ENCODE measurements at regions of chr10 and their contacts with region 1.

Region 1: GRCh38 chr10:76547352-76547972 is 1090.1 kb downstream of the KCNMA1 start:
- DNase-seq: peak; percentile 79
- ATAC-seq: peak; percentile 86

Region 2: DNA sequence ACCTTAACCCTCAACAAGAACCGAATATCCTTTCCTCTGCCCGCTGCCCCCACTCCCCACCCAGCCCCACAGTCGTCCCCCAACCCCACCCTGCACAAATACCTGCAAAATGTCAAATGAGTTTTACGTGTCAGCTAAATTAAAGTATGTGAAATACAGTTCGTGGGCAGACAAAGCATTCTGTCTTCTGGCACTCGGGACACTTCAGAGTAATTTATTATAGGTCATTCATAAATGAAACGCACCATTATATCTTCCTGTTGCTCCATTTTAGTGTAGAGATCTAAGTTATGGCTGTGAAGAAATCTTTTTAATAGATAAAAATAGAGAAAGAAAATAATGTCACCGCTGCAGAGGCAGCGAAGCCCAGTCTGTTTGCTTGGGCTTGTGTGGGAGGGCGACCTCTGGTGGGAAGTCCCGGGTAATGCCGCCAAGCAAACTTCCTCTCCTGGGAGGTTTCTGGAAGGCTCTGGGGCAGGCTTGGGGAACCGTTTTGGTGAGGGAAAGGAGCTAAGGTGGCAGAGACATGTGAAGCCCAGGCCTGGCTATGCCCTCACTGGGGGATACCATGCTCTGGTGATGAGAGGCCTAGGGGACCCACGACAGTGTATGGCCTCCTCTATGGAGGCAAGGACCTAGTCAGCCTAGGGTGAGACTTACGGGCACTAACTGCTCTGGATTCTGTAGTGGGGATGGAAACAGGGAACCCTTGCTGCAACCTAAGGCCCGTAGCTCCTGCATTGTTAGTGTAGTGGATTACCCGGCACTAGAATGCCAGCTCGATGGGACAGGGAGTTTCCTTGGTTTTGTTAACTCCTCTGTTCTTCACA is 511.1 kb before region 1 on chr10:
- intact Hi-C with region 1: loop called (anchors 5 kb)
- DNase-seq: peak; percentile 80
- ATAC-seq: peak; percentile 95

Region 3: GRCh38 chr10:76311752-76312636 is 235.5 kb before region 1 on chr10:
- intact Hi-C with region 1: loop called (anchors 10 kb)
- DNase-seq: peak; percentile 48
- ATAC-seq: peak; percentile 79

Region 4: DNA sequence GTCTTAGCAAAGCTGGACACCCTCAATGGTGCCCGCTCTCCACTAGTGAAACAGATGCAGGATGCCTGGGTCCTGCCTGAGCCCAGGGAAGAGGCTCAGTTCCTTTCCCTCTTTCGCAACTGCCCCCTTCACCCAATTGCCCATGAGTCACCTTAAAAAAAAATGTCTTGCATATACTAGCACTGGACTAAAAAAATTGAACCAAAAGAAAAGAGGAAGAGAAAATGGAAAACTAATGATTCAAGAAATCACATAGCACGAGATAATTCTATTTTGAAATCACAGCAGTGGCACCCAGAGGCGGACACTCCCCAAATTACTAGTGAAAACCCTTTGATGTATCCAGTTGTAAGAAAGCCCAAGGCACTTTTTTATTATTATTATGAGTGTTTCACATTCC is 143.6 kb before region 1 on chr10:
- intact Hi-C with region 1: no loop called
- DNase-seq: no peak
- ATAC-seq: peak; percentile 56

Region 5: GRCh38 chr10:76435157-76435556 is 112.3 kb before region 1 on chr10:
- intact Hi-C with region 1: loop called (anchors 5 kb)
- DNase-seq: no peak
- ATAC-seq: no peak

Region 6: DNA sequence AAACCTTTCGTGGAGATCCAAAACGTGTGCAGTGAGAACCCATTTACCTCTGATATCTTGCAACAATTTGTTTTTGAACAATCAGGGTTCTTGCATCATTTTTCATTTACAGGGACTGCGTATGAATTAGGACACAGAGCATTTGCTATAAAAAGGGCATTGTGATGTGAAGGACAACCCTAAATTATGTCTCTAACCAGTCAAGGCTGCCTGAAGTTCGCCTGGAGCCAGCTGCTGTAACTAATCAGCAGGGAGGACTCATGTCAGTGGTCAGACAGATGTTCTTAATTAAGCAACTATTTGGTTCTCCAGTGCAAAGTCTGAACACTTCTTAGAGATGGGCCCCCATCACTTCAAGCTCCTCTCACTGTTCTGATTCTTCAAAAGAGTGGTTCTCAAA is 415.4 kb after region 1 on chr10:
- intact Hi-C with region 1: no loop called
- DNase-seq: no peak
- ATAC-seq: no peak